Panc1 (cell line): ENCODE measurements at regions of chr12 and their contacts with region 1.

Region 1: DNA sequence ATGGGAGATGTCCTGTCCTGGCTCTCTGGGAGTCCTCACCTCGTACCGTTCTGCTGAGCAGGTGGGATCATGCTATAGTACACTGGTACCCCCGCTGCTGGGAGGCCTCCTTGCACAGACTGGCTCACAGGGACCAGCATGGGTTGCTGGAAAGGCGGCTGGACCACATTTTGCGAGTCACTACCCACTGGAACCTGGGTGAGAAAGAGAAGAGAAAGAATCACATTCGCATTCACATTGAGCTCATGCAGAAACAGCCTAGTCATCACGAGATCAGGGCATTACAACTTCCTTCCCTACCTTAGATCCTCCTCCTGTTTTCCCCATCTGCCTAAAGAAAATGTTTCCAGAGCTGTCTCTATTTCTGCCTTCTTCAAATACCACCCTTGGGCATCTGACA is 17.3 kb upstream of the STAC3 start:
- DNase-seq: no peak
- ATAC-seq: no peak
- H3K4me3 ChIP-seq: no peak overlapping the region
- H3K27ac ChIP-seq: no peak overlapping the region
- H3K4me1 ChIP-seq: no peaks in the 10 kb centered on the region
- H3K27me3 ChIP-seq: no peaks in the 10 kb centered on the region
- CTCF ChIP-seq: no peak

Region 2: GRCh38 chr12:57238854-57239554 is 29.3 kb before region 1 on chr12:
- CTCF ChIA-PET with region 1: interaction called, 11 read pairs
- POLR2A ChIA-PET with region 1: no interaction called
- in situ Hi-C with region 1: no loop called
- intact Hi-C with region 1: no loop called
- DNase-seq: peak; percentile 63
- ATAC-seq: peak; percentile 73
- H3K4me3 ChIP-seq: peak overlapping the region; percentile 56 to 67
- H3K27ac ChIP-seq: no peak overlapping the region; the same call in 1 of the 2 replicates
- H3K4me1 ChIP-seq: peaks cover 21% of the 10 kb centered on the region
- H3K27me3 ChIP-seq: peaks cover 2% of the 10 kb centered on the region; the same call in 1 of the 2 replicates
- CTCF ChIP-seq: peak; percentile 100

Region 3: GRCh38 chr12:57452937-57453509 is 184.8 kb after region 1 on chr12:
- CTCF ChIA-PET with region 1: interaction called, 11 read pairs
- POLR2A ChIA-PET with region 1: no interaction called
- in situ Hi-C with region 1: no loop called
- intact Hi-C with region 1: loop called (anchors 5 kb)
- DNase-seq: no peak
- ATAC-seq: peak; percentile 86
- H3K4me3 ChIP-seq: no peak overlapping the region
- H3K27ac ChIP-seq: no peak overlapping the region
- H3K4me1 ChIP-seq: no peaks in the 10 kb centered on the region
- H3K27me3 ChIP-seq: no peaks in the 10 kb centered on the region
- CTCF ChIP-seq: peak; percentile 96